Gastrocnemius medialis (tissue), 4 donors: ENCODE measurements at regions of chr3 and their contacts with region 1.

Region 1: GRCh38 chr3:193592944-193593667 is at the start of gene OPA1:
- DNase-seq: peak; percentile 95 to 97
- ATAC-seq: peak; percentile 96 to 97
- H3K4me3 ChIP-seq: peak within 1 kb of the TSS; percentile 87 to 98 (median 96)
- H3K27ac ChIP-seq: peak within 1 kb of the TSS; percentile 94 to 95 (median 95)
- H3K4me1 ChIP-seq: peaks cover 22% of the 10 kb centered on the region in 2 donors
- H3K27me3 ChIP-seq: no peaks in the 10 kb centered on the region
- CTCF ChIP-seq: peak in 4 of 5 experiments; percentile 27 to 49 (median 32)
- POLR2A ChIP-seq: peak; percentile 60 to 73
- total RNA-seq, gene OPA1: 59.8 to 78.2 (median 72.2) TPM

Region 2: DNA sequence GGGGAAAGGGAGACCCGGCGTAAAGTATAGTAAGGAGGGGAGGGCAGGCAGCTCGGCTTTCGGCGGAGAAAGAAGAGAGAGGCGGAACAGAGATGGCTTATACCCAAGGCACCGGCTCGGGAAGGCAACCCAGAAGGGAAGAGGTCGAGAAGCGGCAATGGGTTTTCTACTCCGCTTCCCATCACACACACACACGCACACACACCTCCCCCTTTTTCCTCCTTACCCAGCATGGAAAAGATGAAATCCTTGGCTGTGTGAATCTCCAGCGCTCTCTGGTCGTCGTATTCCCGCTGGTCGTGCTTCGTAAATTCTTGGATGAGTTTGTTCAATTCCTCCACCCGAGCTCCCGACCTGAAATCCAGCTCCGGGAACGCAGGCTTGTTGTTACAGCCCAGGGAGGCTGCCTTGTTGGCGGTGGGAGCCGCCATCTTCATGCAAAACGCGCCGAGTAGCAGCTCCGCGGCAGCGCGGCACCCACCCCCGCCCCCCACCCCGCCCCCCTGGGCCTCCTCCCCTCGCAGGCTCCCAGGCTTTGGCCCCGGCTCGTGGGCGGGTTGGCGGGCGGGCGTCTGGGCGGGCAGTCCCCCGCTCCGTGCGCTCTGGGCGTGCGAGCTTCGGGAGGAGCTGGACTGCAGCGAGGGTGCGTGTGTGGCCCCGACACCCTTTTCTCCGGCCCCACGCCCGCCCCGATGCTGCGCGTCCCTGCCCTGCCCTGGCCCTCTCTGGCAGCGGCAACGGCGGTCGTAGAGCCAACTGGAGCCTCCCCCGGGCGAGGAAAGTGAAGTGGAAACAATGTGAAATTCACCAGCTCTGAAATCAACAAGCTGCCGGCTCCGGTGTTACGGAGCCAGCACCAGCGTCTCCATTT is 675.5 kb before region 1 on chr3 and contains the start of gene MB21D2:
- in situ Hi-C with region 1: loop called in 1 of 4 experiments (anchors 25 kb)
- intact Hi-C with region 1: loop called (anchors 5 kb)
- DNase-seq: peak; percentile 34 to 45
- ATAC-seq: peak; percentile 75 to 80
- H3K4me3 ChIP-seq: peak within 1 kb of the TSS; percentile 74 to 92 (median 82)
- H3K27ac ChIP-seq: peak within 1 kb of the TSS; percentile 88 to 94 (median 90)
- H3K4me1 ChIP-seq: peaks cover 11 to 24% of the 10 kb centered on the region in 2 donors
- H3K27me3 ChIP-seq: no peaks in the 10 kb centered on the region
- CTCF ChIP-seq: no peak
- POLR2A ChIP-seq: peak; percentile 38 to 59
- total RNA-seq, gene MB21D2: 1.5 to 3.8 (median 2.7) TPM

Region 3: GRCh38 chr3:193391902-193392301 is 201.2 kb before region 1 on chr3:
- in situ Hi-C with region 1: no loop called
- intact Hi-C with region 1: no loop called
- DNase-seq: no peak
- ATAC-seq: no peak
- H3K4me3 ChIP-seq: no peak overlapping the region
- H3K27ac ChIP-seq: no peak overlapping the region
- H3K4me1 ChIP-seq: no peaks in the 10 kb centered on the region
- H3K27me3 ChIP-seq: no peaks in the 10 kb centered on the region
- CTCF ChIP-seq: no peak
- POLR2A ChIP-seq: no peak